Activated T-helper 1 cell treated with anti-CD3 and anti-CD28 coated beads, Interleukin-12 subunit alpha, Interleukin-12 subunit beta, Interleukin-2, Interleukin-4 antibody, amounts not matched to agents 30 ng/mL and 10 ng/mL and 1 ng/mL, durations not matched to agents 14 hours and 24 hours and 36 hours (primary cell): ENCODE measurements at regions of chr17 and their contacts with region 1.

Region 1: GRCh38 chr17:59892924-59893676 is at the starts of genes RPS6KB1 and TUBD1:
- DNase-seq: peak; percentile 98
- H3K4me3 Mint-ChIP-seq: peak within 1 kb of the TSS; percentile 100
- H3K27ac Mint-ChIP-seq: peak within 1 kb of the TSS; percentile 99
- H3K4me1 Mint-ChIP-seq: peaks cover 58% of the 10 kb centered on the region
- H3K27me3 Mint-ChIP-seq: peaks cover 3% of the 10 kb centered on the region
- total RNA-seq, gene RPS6KB1: 67.6 and 82.7 TPM in 2 replicates
- total RNA-seq, gene TUBD1: 12.3 and 13.2 TPM in 2 replicates

Region 2: GRCh38 chr17:59627770-59628171 is 265.3 kb before region 1 on chr17:
- intact Hi-C with region 1: no loop called
- DNase-seq: no peak
- H3K4me3 Mint-ChIP-seq: no peak overlapping the region
- H3K27ac Mint-ChIP-seq: peak overlapping the region; percentile 75
- H3K4me1 Mint-ChIP-seq: peaks cover 62% of the 10 kb centered on the region
- H3K27me3 Mint-ChIP-seq: no peaks in the 10 kb centered on the region

Region 3: GRCh38 chr17:59941131-59941530 is 48.0 kb after region 1 on chr17:
- intact Hi-C with region 1: loop called (anchors 2 kb)
- DNase-seq: no peak
- H3K4me3 Mint-ChIP-seq: no peak overlapping the region
- H3K27ac Mint-ChIP-seq: peak overlapping the region; percentile 84
- H3K4me1 Mint-ChIP-seq: peaks cover 54% of the 10 kb centered on the region
- H3K27me3 Mint-ChIP-seq: no peaks in the 10 kb centered on the region